ENCODE measurements at regions of chr5 and their contacts with region 1.

Region 1: GRCh38 chr5:180470966-180471582 is 23.1 kb upstream of the CNOT6 start:
- DNase-seq: peak; percentile 53 to 62
- H3K4me3 ChIP-seq: no peak overlapping the region
- H3K27ac ChIP-seq: no peak overlapping the region
- H3K4me1 ChIP-seq: peaks cover 0 to 14% of the 10 kb centered on the region in 2 donors
- H3K27me3 ChIP-seq: no peaks in the 10 kb centered on the region
- CTCF ChIP-seq: peak; percentile 86 to 95 (median 88)
- POLR2A ChIP-seq: no peak

Region 2: GRCh38 chr5:180126726-180127681 is 344.1 kb before region 1 on chr5:
- intact Hi-C with region 1: loop called (anchors 5 kb)
- DNase-seq: peak; percentile 64 to 65
- H3K4me3 ChIP-seq: peak overlapping the region; percentile 20 to 36 (median 31)
- H3K27ac ChIP-seq: peak overlapping the region; percentile 69 to 79 (median 79)
- H3K4me1 ChIP-seq: peaks cover 20 to 24% of the 10 kb centered on the region in 2 donors
- H3K27me3 ChIP-seq: no peaks in the 10 kb centered on the region
- CTCF ChIP-seq: peak; percentile 73 to 95 (median 94)
- POLR2A ChIP-seq: peak in 1 of 2 donors; percentile 3

Region 3: GRCh38 chr5:180294411-180294810 is 176.7 kb before region 1 on chr5:
- intact Hi-C with region 1: loop called (anchors 2 kb)
- DNase-seq: no peak
- H3K4me3 ChIP-seq: no peak overlapping the region
- H3K27ac ChIP-seq: no peak overlapping the region
- H3K4me1 ChIP-seq: peaks cover 22 to 25% of the 10 kb centered on the region in 2 donors
- H3K27me3 ChIP-seq: no peaks in the 10 kb centered on the region
- CTCF ChIP-seq: no peak
- POLR2A ChIP-seq: no peak

Region 4: GRCh38 chr5:180353048-180353979 is 117.8 kb before region 1 on chr5 and contains the start of gene GFPT2:
- intact Hi-C with region 1: loop called (anchors 10 kb)
- DNase-seq: peak; percentile 84 to 85
- H3K4me3 ChIP-seq: peak within 1 kb of the TSS; percentile 19 to 62 (median 59)
- H3K27ac ChIP-seq: peak within 1 kb of the TSS in 2 of 3 donors; percentile 0 to 50
- H3K4me1 ChIP-seq: peaks cover 0 to 9% of the 10 kb centered on the region in 2 donors
- H3K27me3 ChIP-seq: no peaks in the 10 kb centered on the region
- CTCF ChIP-seq: no peak
- POLR2A ChIP-seq: peak; percentile 33 to 66
- total RNA-seq, gene GFPT2: 8.2 to 26.6 (median 11.1) TPM

Region 5: DNA sequence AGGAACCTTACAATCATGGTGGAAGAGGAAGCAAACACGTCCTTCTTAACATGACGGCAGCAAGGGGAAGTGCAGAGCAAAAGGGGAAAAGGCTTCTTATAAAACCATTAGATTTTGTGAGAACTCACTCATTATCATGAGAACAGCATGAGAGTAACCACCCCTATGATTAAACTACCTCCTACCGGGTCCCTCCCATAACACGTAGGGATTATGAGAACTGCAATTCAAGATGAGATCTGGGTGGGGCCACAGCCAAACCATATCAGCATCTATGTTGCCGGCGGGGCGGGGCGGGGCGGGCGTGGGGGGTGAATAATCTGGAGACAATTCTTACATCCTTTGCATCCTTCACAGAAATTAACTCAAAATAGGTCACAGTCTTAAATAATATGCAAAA is 59.1 kb before region 1 on chr5:
- intact Hi-C with region 1: no loop called
- DNase-seq: no peak
- H3K4me3 ChIP-seq: no peak overlapping the region
- H3K27ac ChIP-seq: no peak overlapping the region
- H3K4me1 ChIP-seq: no peaks in the 10 kb centered on the region
- H3K27me3 ChIP-seq: no peaks in the 10 kb centered on the region
- CTCF ChIP-seq: no peak
- POLR2A ChIP-seq: no peak